ENCODE measurements at regions of chr12 and their contacts with region 1.

Region 1: GRCh38 chr12:14995583-14996425 is 23.0 kb downstream of the PDE6H start:
- H3K4me3 ChIP-seq: no peak overlapping the region
- H3K27ac ChIP-seq: no peak overlapping the region
- H3K4me1 ChIP-seq: no peaks in the 10 kb centered on the region
- CTCF ChIP-seq: peak; percentile 32

Region 2: DNA sequence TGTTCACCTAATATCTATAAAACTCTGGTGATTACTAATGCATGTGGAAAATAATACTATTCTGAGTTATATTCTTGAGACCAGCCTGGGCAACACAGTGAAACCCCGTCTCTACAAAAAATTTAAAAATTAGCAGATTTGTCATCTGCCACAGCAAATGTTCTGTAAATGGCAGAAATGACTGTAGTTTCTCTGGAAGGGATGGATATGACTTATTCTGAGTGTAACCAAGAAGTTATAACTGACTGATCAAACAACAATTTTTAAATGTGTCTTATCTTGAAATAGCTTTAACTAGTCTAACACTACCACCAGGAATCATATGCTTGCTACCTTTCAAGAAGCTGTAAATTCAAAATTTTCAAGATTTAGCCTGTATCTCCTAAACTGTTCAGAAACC is 516.8 kb before region 1 on chr12:
- CTCF ChIA-PET with region 1: no interaction called
- POLR2A ChIA-PET with region 1: no interaction called
- H3K4me3 ChIP-seq: no peak overlapping the region
- H3K27ac ChIP-seq: no peak overlapping the region
- H3K4me1 ChIP-seq: no peaks in the 10 kb centered on the region
- CTCF ChIP-seq: no peak

Region 3: GRCh38 chr12:14716848-14717444 is 278.9 kb before region 1 on chr12:
- CTCF ChIA-PET with region 1: interaction called, 12 read pairs
- POLR2A ChIA-PET with region 1: no interaction called
- H3K4me3 ChIP-seq: no peak overlapping the region
- H3K27ac ChIP-seq: no peak overlapping the region
- H3K4me1 ChIP-seq: no peaks in the 10 kb centered on the region
- CTCF ChIP-seq: no peak

Region 4: GRCh38 chr12:14810953-14811483 is 184.8 kb before region 1 on chr12:
- CTCF ChIA-PET with region 1: interaction called, 10 read pairs
- POLR2A ChIA-PET with region 1: no interaction called
- H3K4me3 ChIP-seq: no peak overlapping the region
- H3K27ac ChIP-seq: no peak overlapping the region
- H3K4me1 ChIP-seq: no peaks in the 10 kb centered on the region
- CTCF ChIP-seq: no peak

Region 5: GRCh38 chr12:14845350-14845750 is 150.5 kb before region 1 on chr12:
- CTCF ChIA-PET with region 1: interaction called, 86 read pairs
- POLR2A ChIA-PET with region 1: no interaction called
- H3K4me3 ChIP-seq: no peak overlapping the region
- H3K27ac ChIP-seq: no peak overlapping the region
- H3K4me1 ChIP-seq: peaks cover 5% of the 10 kb centered on the region; the same call in 1 of the 2 replicates
- CTCF ChIP-seq: peak; percentile 51; the same call in 1 of the 2 replicates

Region 6: GRCh38 chr12:14970473-14970872 is 25.3 kb before region 1 on chr12:
- CTCF ChIA-PET with region 1: no interaction called
- POLR2A ChIA-PET with region 1: no interaction called
- H3K4me3 ChIP-seq: no peak overlapping the region
- H3K27ac ChIP-seq: no peak overlapping the region
- H3K4me1 ChIP-seq: no peaks in the 10 kb centered on the region
- CTCF ChIP-seq: no peak

Region 7: GRCh38 chr12:15417691-15418090 is 421.9 kb after region 1 on chr12:
- CTCF ChIA-PET with region 1: no interaction called
- POLR2A ChIA-PET with region 1: no interaction called
- H3K4me3 ChIP-seq: no peak overlapping the region
- H3K27ac ChIP-seq: no peak overlapping the region
- H3K4me1 ChIP-seq: no peaks in the 10 kb centered on the region; the same call in 1 of the 2 replicates
- CTCF ChIP-seq: no peak